ENCODE measurements at regions of chr16 and their contacts with region 1.

Region 1: DNA sequence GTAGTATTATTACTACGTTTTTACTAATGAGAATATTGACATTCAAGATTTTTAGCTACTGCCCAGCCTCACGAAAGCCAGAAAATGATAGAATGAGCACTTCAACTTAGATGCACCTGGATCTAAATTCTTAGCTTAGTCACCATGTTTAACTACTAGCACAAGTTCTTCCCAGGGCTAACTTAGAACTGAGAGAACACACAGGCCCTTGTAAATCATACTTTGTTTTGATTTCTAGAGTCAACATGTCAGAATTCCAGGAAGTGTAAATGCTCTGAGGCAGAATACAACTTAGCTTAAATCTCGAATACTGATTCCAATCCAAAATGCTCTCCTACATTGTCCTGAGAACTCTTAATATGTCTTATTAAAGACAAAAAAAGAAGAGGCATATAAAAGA is 6.8 kb upstream of the ACSM1 start:
- DNase-seq: no peak
- H3K4me3 ChIP-seq: no peak overlapping the region
- H3K27ac ChIP-seq: peak overlapping the region in 3 of 4 donors; percentile 24 to 75 (median 67)
- H3K4me1 ChIP-seq: peaks cover 0 to 13% (median 3%) of the 10 kb centered on the region in 4 donors
- H3K27me3 ChIP-seq: no peaks in the 10 kb centered on the region
- CTCF ChIP-seq: no peak
- EP300 ChIP-seq: peak; percentile 53 to 89 (median 88)
- POLR2A ChIP-seq: no peak

Region 2: DNA sequence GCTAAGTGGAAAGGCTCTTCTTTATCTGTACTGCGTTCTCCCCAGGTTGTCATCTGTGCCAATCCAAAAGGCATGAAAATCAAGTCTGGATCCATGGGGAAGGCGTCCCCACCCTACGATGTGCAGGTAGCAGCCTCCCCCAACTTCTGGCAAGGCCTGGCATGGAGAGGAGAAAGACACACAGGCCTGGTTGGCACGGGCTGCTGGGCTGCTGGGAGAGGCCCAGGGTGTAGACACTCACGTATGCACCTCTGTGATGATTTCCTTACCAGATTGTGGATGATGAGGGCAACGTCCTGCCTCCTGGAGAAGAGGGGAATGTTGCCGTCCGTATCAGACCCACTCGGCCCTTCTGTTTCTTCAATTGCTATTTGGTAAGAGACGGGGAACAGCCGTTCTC is 273.3 kb before region 1 on chr16:
- intact Hi-C with region 1: loop called (anchors 10 kb)
- DNase-seq: no peak
- H3K4me3 ChIP-seq: no peak overlapping the region
- H3K27ac ChIP-seq: no peak overlapping the region
- H3K4me1 ChIP-seq: no peaks in the 10 kb centered on the region
- H3K27me3 ChIP-seq: no peaks in the 10 kb centered on the region
- CTCF ChIP-seq: no peak
- EP300 ChIP-seq: no peak
- POLR2A ChIP-seq: no peak

Region 3: GRCh38 chr16:20598832-20599469 is 105.3 kb before region 1 on chr16:
- intact Hi-C with region 1: loop called (anchors 10 kb)
- DNase-seq: no peak
- H3K4me3 ChIP-seq: no peak overlapping the region
- H3K27ac ChIP-seq: no peak overlapping the region
- H3K4me1 ChIP-seq: no peaks in the 10 kb centered on the region
- H3K27me3 ChIP-seq: no peaks in the 10 kb centered on the region
- CTCF ChIP-seq: no peak
- EP300 ChIP-seq: no peak
- POLR2A ChIP-seq: no peak

Measured in sigmoid colon (tissue), 7 donors.